Mammary epithelial cell (primary cell): ENCODE measurements at regions of chrX and their contacts with region 1.

Region 1: DNA sequence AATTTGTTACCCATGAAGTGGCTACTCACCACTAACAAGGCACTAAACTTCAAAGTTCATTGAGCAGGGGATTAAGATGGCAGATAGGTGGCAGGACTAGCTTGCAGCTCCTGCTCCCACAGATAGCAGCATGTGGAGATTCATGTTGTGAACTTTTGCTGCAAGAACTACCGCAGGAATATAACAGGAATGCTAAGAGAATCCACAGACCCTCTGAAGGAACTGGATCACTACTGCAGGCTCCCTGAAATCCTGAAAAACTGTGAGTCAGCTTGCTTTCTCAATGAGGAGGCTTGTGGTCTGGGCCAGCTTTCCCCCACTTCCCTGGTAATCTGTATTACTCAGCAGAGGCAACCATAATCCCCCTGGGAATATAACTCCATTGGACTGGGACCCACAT is 118.5 kb upstream of the VCX2 start:
- DNase-seq: peak; percentile 7
- H3K4me3 ChIP-seq: no peak overlapping the region
- H3K27ac ChIP-seq: no peak overlapping the region
- H3K4me1 ChIP-seq: no peaks in the 10 kb centered on the region
- H3K27me3 ChIP-seq: no peaks in the 10 kb centered on the region
- CTCF ChIP-seq: no peak

Region 2: GRCh38 chrX:8196776-8197175 is 92.7 kb before region 1 on chrX:
- CTCF ChIA-PET with region 1: no interaction called
- dilution Hi-C with region 1: loop called (anchors 5 kb)
- in situ Hi-C with region 1: no loop called
- intact Hi-C with region 1: no loop called
- DNase-seq: no peak
- H3K4me3 ChIP-seq: no peak overlapping the region
- H3K27ac ChIP-seq: no peak overlapping the region
- H3K4me1 ChIP-seq: no peaks in the 10 kb centered on the region
- H3K27me3 ChIP-seq: no peaks in the 10 kb centered on the region
- CTCF ChIP-seq: no peak

Region 3: DNA sequence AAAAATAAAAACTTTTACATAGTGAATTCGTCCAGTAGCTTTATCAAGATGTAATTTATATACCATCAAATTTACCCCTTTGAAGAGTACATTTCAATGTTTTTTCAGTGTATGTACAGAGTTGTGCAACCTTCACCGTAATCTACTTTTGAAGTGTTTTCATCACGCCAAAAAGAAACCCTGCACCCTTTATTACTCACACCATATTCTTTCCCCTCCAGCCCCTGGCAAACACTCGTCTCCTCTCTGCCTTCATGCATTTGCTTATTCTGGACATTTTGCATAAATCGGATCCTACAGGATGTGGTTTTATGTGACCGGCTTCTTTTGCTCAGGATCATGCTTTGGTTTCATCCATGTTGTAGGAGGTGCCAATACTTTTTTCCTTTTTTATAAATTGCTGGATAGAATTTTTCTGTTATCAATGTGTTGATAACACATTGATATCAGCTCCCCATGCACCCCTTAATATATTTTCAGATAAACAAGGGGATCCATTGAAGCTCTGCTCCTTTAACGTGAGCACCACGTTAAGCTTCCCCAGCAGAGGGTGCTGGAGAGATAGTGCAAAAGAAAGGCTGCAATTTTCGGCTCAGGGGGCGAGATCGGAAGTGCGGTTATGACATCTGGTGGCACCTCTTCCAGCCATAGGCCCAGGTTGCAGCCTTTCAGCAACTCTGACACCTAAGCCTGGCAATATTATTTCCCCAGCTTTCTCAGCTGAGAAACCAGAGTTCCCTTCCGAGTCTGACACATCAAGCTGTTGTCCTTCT is 75.0 kb after region 1 on chrX:
- CTCF ChIA-PET with region 1: no interaction called
- dilution Hi-C with region 1: no loop called
- in situ Hi-C with region 1: no loop called
- intact Hi-C with region 1: no loop called
- DNase-seq: no peak
- H3K4me3 ChIP-seq: no peak overlapping the region
- H3K27ac ChIP-seq: no peak overlapping the region
- H3K4me1 ChIP-seq: no peaks in the 10 kb centered on the region
- H3K27me3 ChIP-seq: no peaks in the 10 kb centered on the region
- CTCF ChIP-seq: peak; percentile 30 to 58